OCI-LY7 (cell line): ENCODE measurements at regions of chr9 and their contacts with region 1.

Region 1: GRCh38 chr9:128881901-128882681 is at the starts of genes KYAT1 and LRRC8A:
- DNase-seq: peak; percentile 99
- H3K4me3 ChIP-seq: peak within 1 kb of the TSS; percentile 95
- H3K27ac ChIP-seq: peak within 1 kb of the TSS; percentile 91
- H3K4me1 ChIP-seq: peaks cover 40% of the 10 kb centered on the region
- CTCF ChIP-seq: no peak
- total RNA-seq, gene KYAT1: 38.2 and 44.7 TPM in 2 replicates
- total RNA-seq, gene LRRC8A: 20.0 and 26.9 TPM in 2 replicates

Region 2: DNA sequence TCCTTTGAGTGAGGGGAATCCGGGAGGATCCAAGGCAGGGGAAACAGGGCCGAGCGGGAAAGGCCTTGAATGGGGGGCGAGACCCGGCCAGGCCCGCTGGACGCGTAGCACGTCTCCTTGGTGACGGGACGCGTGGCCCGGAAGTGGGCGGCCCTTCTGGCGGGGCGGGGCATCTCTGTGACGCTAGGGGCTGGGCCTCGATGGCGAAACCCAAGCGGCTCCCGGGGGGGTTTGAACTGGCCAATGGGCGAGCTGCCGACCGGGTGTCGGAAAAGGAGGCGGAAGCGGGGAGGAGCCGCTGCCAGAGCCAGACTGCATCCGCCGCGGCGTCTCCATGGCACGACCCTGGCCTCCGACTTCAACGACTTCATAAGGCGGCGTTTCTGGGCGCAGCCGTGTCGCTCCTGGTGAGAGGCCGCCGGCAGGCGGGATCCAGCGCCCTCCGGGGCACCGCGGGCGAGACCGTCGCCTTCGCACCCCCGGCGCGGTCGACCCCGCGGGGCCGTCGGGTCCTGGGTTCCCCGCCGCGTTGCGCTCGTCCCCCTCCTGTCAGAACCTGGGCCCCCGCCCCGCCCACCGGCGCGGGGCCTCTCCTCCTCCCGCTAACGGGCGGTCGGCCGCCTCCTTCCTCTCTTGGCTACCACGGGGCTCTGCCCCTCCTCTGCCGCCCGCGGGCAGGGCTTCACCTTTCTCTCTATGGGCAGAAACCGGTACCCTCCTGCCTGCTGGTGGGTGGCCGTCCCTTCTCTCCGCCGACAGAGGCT is 426.1 kb before region 1 on chr9 and contains the start of gene ODF2:
- CTCF ChIA-PET with region 1: no interaction called
- POLR2A ChIA-PET with region 1: no interaction called
- intact Hi-C with region 1: loop called (anchors 2 kb)
- DNase-seq: peak; percentile 98
- H3K4me3 ChIP-seq: peak within 1 kb of the TSS; percentile 76
- H3K27ac ChIP-seq: peak within 1 kb of the TSS; percentile 75
- H3K4me1 ChIP-seq: peaks cover 10% of the 10 kb centered on the region
- CTCF ChIP-seq: no peak
- total RNA-seq, gene ODF2: 84.4 and 94.3 TPM in 2 replicates

Region 3: GRCh38 chr9:128921881-128922763 is 40.0 kb after region 1 on chr9:
- CTCF ChIA-PET with region 1: interaction called, 4 read pairs
- POLR2A ChIA-PET with region 1: interaction called, 10 read pairs
- intact Hi-C with region 1: loop called (anchors 1 kb)
- DNase-seq: peak; percentile 86
- H3K4me3 ChIP-seq: peak overlapping the region; percentile 79
- H3K27ac ChIP-seq: peak overlapping the region; percentile 98
- H3K4me1 ChIP-seq: peaks cover 37% of the 10 kb centered on the region
- CTCF ChIP-seq: no peak

Region 4: GRCh38 chr9:129028192-129028957 is 146.3 kb after region 1 on chr9 and contains the start of gene SH3GLB2:
- CTCF ChIA-PET with region 1: no interaction called
- POLR2A ChIA-PET with region 1: interaction called, 3 read pairs
- intact Hi-C with region 1: loop called (anchors 1 kb)
- DNase-seq: peak; percentile 89
- H3K4me3 ChIP-seq: peak within 1 kb of the TSS; percentile 74
- H3K27ac ChIP-seq: peak within 1 kb of the TSS; percentile 10
- H3K4me1 ChIP-seq: peaks cover 24% of the 10 kb centered on the region
- CTCF ChIP-seq: peak; percentile 84
- total RNA-seq, gene SH3GLB2: 58.4 and 73.6 TPM in 2 replicates